CD8-positive, alpha-beta T cell (primary cell): ENCODE measurements at regions of chr1 and their contacts with region 1.

Region 1: GRCh38 chr1:209565759-209566678 is 17.5 kb upstream of the CAMK1G start:
- DNase-seq: peak; percentile 38 to 78 (median 72)
- ATAC-seq: peak; percentile 74
- H3K4me3 ChIP-seq: no peak overlapping the region
- H3K4me3 Mint-ChIP-seq: no peak overlapping the region
- H3K27ac ChIP-seq: no peak overlapping the region
- H3K27ac Mint-ChIP-seq: no peak overlapping the region
- H3K4me1 ChIP-seq: no peaks in the 10 kb centered on the region
- H3K4me1 Mint-ChIP-seq: peaks cover 6% of the 10 kb centered on the region
- H3K27me3 ChIP-seq: peaks cover 0 to 3% of the 10 kb centered on the region in 2 experiments
- H3K27me3 Mint-ChIP-seq: peaks cover 33% of the 10 kb centered on the region
- CTCF ChIP-seq: peak; percentile 70

Region 2: DNA sequence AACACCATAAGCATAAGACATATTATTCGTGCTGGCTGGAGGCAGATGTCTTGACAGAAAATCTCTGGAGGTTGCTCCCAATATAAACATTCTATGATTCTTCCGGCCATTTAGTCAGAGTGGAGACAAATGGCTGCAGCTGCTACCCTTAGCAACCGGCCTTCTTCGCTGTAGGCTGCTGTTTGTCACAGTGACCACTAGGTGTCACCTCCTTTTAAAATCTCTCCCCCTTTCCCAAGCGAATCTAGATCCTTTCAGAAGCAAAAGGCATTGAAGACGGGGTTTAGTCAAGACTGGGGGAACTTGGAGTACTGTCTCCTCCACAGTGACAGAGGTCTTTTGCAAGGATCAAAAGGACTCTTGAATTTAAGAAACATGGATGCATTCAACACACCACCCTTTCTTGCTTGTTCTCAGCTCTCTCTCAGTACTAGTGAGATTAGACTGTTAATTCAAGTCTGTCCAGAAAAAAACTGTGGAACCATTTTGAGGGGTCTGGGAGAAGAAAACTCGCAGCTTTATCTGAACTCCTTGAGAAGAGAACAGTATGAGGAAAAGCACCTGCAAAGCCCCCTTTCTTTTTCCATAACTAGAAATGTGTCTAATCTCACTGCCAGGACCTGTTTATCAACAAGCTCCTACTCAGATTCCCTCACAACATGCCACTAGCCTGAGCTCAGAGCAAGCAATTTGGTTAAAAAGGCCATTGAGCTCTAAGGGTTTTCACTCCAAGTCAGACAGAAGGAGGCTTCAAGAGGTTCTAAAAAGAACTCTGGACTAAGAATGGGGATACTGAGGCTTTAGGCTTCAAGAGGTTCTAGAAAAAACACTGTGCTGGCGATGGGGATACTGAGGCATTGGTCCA is 913.5 kb before region 1 on chr1:
- CTCF ChIA-PET with region 1: interaction called, 4 read pairs
- POLR2A ChIA-PET with region 1: no interaction called
- intact Hi-C with region 1: loop called in 1 of 2 experiments (anchors 5 kb)
- DNase-seq: peak in 3 of 9 experiments; percentile 10 to 42 (median 17)
- ATAC-seq: no peak
- H3K4me3 ChIP-seq: no peak overlapping the region
- H3K4me3 Mint-ChIP-seq: no peak overlapping the region
- H3K27ac ChIP-seq: no peak overlapping the region
- H3K27ac Mint-ChIP-seq: no peak overlapping the region
- H3K4me1 ChIP-seq: no peaks in the 10 kb centered on the region
- H3K4me1 Mint-ChIP-seq: no peaks in the 10 kb centered on the region
- H3K27me3 ChIP-seq: no peaks in the 10 kb centered on the region
- H3K27me3 Mint-ChIP-seq: peaks cover 32% of the 10 kb centered on the region
- CTCF ChIP-seq: peak; percentile 62

Region 3: DNA sequence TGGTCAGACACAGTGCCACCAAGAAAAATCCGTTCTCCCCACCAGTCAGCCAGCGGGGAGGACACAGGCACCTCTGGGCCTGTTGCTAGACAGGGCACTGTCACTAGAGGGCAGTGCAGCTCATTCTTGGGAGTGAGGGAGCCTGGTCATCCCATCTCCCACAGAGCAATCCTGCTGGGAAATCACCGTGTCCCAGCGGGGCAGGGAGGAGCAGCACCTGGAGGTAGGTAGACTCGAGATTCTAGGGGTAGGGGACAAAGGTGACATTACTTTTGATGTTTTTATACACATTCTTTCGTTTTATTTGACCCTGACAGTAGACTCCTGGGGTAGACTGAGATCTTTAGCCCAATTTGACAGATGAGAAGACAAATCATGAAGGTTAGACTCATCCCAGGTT is 10.8 kb after region 1 on chr1:
- CTCF ChIA-PET with region 1: interaction called, 19 read pairs
- POLR2A ChIA-PET with region 1: no interaction called
- intact Hi-C with region 1: no loop called
- DNase-seq: peak; percentile 24 to 71 (median 63)
- ATAC-seq: peak; percentile 75
- H3K4me3 ChIP-seq: no peak overlapping the region
- H3K4me3 Mint-ChIP-seq: no peak overlapping the region
- H3K27ac ChIP-seq: no peak overlapping the region
- H3K27ac Mint-ChIP-seq: no peak overlapping the region
- H3K4me1 ChIP-seq: no peaks in the 10 kb centered on the region
- H3K4me1 Mint-ChIP-seq: no peaks in the 10 kb centered on the region
- H3K27me3 ChIP-seq: no peaks in the 10 kb centered on the region
- H3K27me3 Mint-ChIP-seq: peaks cover 8% of the 10 kb centered on the region
- CTCF ChIP-seq: peak; percentile 82

Region 4: DNA sequence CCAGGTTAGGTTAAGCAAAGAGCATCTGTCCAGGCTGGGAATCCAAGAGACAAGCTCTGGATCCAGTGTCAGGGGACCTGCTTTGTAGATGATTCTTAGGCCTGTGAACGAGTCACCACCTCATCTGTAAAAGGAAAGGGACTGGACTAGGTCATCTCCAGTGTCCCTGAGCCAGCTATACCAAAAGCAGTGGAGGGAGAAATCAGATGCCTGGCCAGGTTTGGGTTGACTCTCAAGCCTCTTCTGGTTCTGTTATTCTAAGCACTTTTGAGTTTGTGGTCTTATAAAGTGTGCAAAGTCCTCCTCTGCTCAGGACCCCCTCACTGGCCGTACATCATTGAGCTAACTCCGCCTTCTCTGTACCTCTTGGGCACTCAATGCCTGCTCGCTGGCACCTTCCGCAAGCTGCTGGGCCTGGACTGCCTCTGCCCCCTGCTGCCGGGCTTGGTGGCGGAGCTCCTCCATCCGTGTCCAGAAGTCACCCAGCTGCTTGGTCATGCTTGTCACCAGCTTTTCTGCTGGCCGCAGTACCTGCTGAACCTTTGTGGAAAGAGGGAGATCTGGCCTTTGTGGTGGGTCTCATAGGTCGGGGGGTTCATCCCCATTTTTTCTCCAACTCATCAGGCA is 51.1 kb after region 1 on chr1:
- CTCF ChIA-PET with region 1: no interaction called
- POLR2A ChIA-PET with region 1: no interaction called
- intact Hi-C with region 1: no loop called
- DNase-seq: no peak
- ATAC-seq: no peak
- H3K4me3 ChIP-seq: no peak overlapping the region
- H3K4me3 Mint-ChIP-seq: no peak overlapping the region
- H3K27ac ChIP-seq: no peak overlapping the region
- H3K27ac Mint-ChIP-seq: no peak overlapping the region
- H3K4me1 ChIP-seq: no peaks in the 10 kb centered on the region
- H3K4me1 Mint-ChIP-seq: peaks cover 10% of the 10 kb centered on the region
- H3K27me3 ChIP-seq: no peaks in the 10 kb centered on the region
- H3K27me3 Mint-ChIP-seq: peaks cover 3% of the 10 kb centered on the region
- CTCF ChIP-seq: no peak

Region 5: GRCh38 chr1:209627732-209628196 is 61.7 kb after region 1 on chr1:
- CTCF ChIA-PET with region 1: interaction called, 7 read pairs
- POLR2A ChIA-PET with region 1: no interaction called
- intact Hi-C with region 1: loop called in 1 of 2 experiments (anchors 1 kb)
- DNase-seq: peak; percentile 45 to 84 (median 73)
- ATAC-seq: peak; percentile 84
- H3K4me3 ChIP-seq: no peak overlapping the region
- H3K4me3 Mint-ChIP-seq: no peak overlapping the region
- H3K27ac ChIP-seq: no peak overlapping the region
- H3K27ac Mint-ChIP-seq: no peak overlapping the region
- H3K4me1 ChIP-seq: no peaks in the 10 kb centered on the region
- H3K4me1 Mint-ChIP-seq: peaks cover 2% of the 10 kb centered on the region
- H3K27me3 ChIP-seq: no peaks in the 10 kb centered on the region
- H3K27me3 Mint-ChIP-seq: peaks cover 2% of the 10 kb centered on the region
- CTCF ChIP-seq: peak; percentile 95

Region 6: GRCh38 chr1:210311726-210312493 is 745.9 kb after region 1 on chr1:
- CTCF ChIA-PET with region 1: no interaction called
- POLR2A ChIA-PET with region 1: no interaction called
- intact Hi-C with region 1: loop called in 1 of 2 experiments (anchors 5 kb)
- DNase-seq: no peak
- ATAC-seq: no peak
- H3K4me3 ChIP-seq: no peak overlapping the region
- H3K4me3 Mint-ChIP-seq: peak overlapping the region; percentile 91
- H3K27ac ChIP-seq: no peak overlapping the region
- H3K27ac Mint-ChIP-seq: no peak overlapping the region
- H3K4me1 ChIP-seq: no peaks in the 10 kb centered on the region
- H3K4me1 Mint-ChIP-seq: peaks cover 8% of the 10 kb centered on the region
- H3K27me3 ChIP-seq: no peaks in the 10 kb centered on the region
- H3K27me3 Mint-ChIP-seq: peaks cover 20% of the 10 kb centered on the region
- CTCF ChIP-seq: no peak